ENCODE measurements at regions of chr2 and their contacts with region 1.

Region 1: DNA sequence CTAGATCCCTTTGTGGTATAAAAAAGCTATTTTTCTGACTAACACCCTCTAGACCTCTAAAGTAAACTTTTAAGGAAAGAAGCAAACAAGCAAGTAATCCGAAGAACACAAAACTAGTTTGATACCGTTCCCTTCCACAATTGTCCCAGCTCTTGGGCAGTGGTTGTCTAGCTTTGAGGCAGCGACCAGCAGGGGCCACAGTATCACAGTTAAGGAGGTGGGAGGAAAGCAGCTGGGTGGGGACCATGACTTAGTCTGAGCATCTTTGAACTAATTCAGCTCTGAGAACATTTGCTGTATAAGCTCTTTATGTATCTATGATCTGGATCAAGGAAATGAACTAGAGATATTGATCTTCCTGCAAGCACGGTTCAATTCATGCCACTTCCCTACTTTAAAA is 51.0 kb downstream of the SF3B1 start:
- DNase-seq: no peak
- H3K4me3 ChIP-seq: no peak overlapping the region
- H3K27ac ChIP-seq: no peak overlapping the region
- H3K4me1 ChIP-seq: no peaks in the 10 kb centered on the region
- H3K27me3 ChIP-seq: no peaks in the 10 kb centered on the region
- CTCF ChIP-seq: no peak
- EP300 ChIP-seq: no peak
- POLR2A ChIP-seq: no peak

Region 2: GRCh38 chr2:197011799-197012641 is 371.8 kb before region 1 on chr2:
- in situ Hi-C with region 1: loop called in 3 of 4 experiments (anchors 10 to 25 kb)
- intact Hi-C with region 1: no loop called
- DNase-seq: no peak
- H3K4me3 ChIP-seq: no peak overlapping the region
- H3K27ac ChIP-seq: no peak overlapping the region
- H3K4me1 ChIP-seq: no peaks in the 10 kb centered on the region
- H3K27me3 ChIP-seq: no peaks in the 10 kb centered on the region
- CTCF ChIP-seq: peak; percentile 67 to 76 (median 72)
- EP300 ChIP-seq: no peak
- POLR2A ChIP-seq: no peak

Region 3: GRCh38 chr2:197191177-197191939 is 192.5 kb before region 1 on chr2:
- in situ Hi-C with region 1: loop called in 3 of 4 experiments (anchors 5 to 10 kb)
- intact Hi-C with region 1: no loop called
- DNase-seq: no peak
- H3K4me3 ChIP-seq: no peak overlapping the region
- H3K27ac ChIP-seq: no peak overlapping the region
- H3K4me1 ChIP-seq: peaks cover 0 to 21% (median 3%) of the 10 kb centered on the region in 4 donors
- H3K27me3 ChIP-seq: no peaks in the 10 kb centered on the region
- CTCF ChIP-seq: peak; percentile 71 to 91 (median 74)
- EP300 ChIP-seq: no peak
- POLR2A ChIP-seq: no peak

Measured in transverse colon (tissue), 4 donors.